Activated T-helper 2 cell treated with anti-CD3 and anti-CD28 coated beads, Interferon-gamma antibody, Interleukin-2, Interleukin-4, amounts not matched to agents 10 μg/mL and 5 μg/mL and 100 μg/mL, durations not matched to agents 14 hours and 24 hours and 36 hours (primary cell): ENCODE measurements at regions of chr1 and their contacts with region 1.

Region 1: DNA sequence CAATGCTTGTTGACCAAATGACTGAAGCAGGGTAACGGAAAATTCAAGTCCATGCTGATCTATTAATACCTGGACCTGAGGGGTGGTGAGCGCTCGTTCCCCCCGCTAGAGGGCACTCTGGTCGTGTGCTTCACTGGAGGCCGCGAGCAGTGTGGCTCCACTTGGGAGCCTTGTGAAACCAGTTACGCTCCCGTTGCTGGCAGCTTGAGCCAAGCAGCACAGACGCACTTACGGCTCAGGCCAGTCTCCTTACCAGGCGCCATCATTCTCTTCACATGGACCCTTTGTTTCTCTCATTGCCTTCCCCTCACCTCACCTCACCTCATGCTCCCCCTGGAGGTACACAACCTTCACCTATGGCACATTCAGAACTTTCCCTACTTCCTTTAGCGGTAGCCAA is 49.7 kb upstream of the TSPAN2 start:
- DNase-seq: peak; percentile 41
- H3K4me3 Mint-ChIP-seq: no peak overlapping the region
- H3K27ac Mint-ChIP-seq: no peak overlapping the region
- H3K4me1 Mint-ChIP-seq: no peaks in the 10 kb centered on the region
- H3K27me3 Mint-ChIP-seq: peaks cover 26% of the 10 kb centered on the region

Region 2: DNA sequence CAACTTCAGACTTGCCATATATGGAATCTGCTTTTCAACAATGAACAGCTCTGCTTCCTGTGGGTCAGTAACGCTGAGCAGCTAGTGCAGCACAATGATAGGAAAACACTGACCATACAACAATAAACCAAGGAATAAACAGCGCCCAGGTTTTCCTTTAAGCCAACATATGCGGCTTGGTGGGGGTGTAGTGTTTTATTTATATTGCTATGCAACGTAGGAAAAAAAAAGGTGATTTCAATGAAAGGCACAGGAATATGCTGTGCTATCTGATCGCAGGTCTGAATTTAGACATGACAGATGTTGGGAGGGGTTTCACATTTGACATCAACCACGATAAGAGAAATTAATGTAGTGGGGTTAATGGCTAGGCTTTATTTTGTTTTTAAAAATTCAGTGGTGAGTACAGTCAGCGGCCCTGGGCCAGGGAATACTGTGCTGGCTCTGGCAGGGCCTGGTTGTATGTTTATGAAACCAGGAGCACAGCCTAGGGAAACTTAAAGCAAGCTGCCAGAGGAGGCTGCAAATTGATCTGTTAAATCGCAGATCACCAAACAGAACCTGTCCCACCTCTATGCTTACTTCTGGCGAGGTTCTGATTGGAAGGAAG is 54.0 kb before region 1 on chr1:
- intact Hi-C with region 1: no loop called
- DNase-seq: no peak
- H3K4me3 Mint-ChIP-seq: no peak overlapping the region
- H3K27ac Mint-ChIP-seq: no peak overlapping the region
- H3K4me1 Mint-ChIP-seq: peaks cover 6% of the 10 kb centered on the region
- H3K27me3 Mint-ChIP-seq: peaks cover 36% of the 10 kb centered on the region

Region 3: GRCh38 chr1:115198938-115199337 is 60.0 kb after region 1 on chr1:
- intact Hi-C with region 1: no loop called
- DNase-seq: no peak
- H3K4me3 Mint-ChIP-seq: no peak overlapping the region
- H3K27ac Mint-ChIP-seq: no peak overlapping the region
- H3K4me1 Mint-ChIP-seq: no peaks in the 10 kb centered on the region
- H3K27me3 Mint-ChIP-seq: peaks cover 8% of the 10 kb centered on the region

Region 4: DNA sequence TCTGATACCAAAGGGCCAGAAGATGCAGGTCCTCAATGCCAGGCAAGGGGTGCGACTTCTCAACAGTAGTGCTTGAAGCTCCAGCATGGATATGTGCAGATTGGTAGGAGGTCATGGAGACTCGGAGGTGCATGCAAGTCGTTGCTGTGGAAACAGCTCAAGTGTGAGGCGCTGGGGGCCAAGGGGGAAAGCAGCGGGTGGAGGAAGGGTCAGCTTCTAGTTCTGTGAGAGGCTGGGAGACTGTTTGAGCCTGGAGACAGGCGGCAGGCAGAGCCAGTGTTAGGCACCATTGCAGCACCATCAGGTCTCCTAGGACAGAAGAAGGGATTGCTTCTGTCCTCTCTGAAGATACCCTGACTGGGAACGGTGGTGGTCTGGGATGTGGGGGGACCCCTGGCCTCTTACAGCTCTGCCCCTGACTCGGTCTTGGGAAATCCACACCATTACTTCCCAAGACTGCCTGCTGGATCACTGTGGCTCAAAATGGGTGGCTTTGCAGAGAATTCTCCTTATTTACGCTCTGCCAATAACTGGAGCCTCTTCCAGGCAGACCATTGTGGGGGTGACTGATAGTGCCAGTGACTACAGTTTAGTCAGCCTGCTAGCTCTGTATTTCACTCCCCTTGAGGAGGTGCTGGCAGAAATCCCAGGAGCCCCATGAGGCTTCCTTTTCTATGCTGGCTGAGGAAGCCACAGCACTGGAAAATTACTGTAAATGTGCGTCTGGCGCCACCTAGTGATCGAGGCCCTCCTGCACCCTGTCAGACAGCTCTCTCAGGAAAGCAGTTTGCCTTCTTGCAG is 456.5 kb after region 1 on chr1:
- intact Hi-C with region 1: loop called (anchors 2 kb)
- DNase-seq: peak; percentile 48
- H3K4me3 Mint-ChIP-seq: no peak overlapping the region
- H3K27ac Mint-ChIP-seq: no peak overlapping the region
- H3K4me1 Mint-ChIP-seq: no peaks in the 10 kb centered on the region
- H3K27me3 Mint-ChIP-seq: no peaks in the 10 kb centered on the region